Naive thymus-derived CD4-positive, alpha-beta T cell (primary cell): ENCODE measurements at regions of chr10 and their contacts with region 1.

Region 1: DNA sequence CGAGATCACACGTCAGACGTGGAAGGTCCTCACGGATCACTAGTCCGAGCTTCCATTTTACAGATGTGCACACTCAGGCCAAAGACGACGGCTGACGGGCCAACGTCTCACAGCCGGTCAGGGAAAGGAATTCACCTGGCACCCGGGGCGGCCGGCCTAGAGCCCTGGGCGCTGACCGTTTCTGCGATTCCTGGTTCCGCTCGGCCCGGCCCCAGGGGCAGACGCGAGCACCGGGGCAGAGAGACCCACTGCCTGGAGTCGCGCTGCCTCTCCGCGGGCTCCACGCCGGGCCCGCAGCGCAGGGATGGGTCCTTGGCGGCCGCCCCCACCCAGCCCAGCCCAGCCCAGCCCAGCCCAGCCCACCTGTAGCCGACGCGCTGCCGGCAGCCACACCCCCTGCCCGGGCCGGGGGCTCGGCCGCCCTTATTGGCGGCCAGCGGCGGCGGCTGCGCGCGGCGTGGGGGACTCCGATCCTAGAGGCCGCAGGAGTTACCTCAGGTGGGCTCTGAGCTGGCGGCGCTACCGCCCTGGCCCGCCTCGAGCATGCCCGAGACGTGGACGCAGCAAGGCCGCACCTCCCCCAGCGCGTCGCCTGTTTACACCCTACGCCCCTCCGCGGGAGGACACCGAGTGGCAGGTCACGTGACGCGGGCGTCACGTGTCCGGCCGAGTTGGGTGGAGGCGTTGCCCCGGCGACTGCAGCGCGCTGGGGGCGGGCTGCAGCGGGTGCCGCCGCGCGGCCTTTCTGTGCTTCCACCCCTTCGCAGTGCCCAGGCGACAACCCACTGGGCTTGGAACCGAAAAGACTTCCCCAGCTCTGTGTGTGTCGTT is 78.1 kb downstream of the ZFAND4 start:
- DNase-seq: peak; percentile 83 to 94 (median 88)
- ATAC-seq: peak; percentile 95
- H3K4me3 ChIP-seq: peak overlapping the region; percentile 85
- H3K4me3 Mint-ChIP-seq: peak overlapping the region; percentile 86 to 96 (median 93)
- H3K27ac ChIP-seq: peak overlapping the region; percentile 79
- H3K27ac Mint-ChIP-seq: peak overlapping the region; percentile 72 to 97 (median 93)
- H3K4me1 ChIP-seq: peaks cover 11 to 20% of the 10 kb centered on the region in 2 donors
- H3K4me1 Mint-ChIP-seq: peaks cover 27 to 51% (median 40%) of the 10 kb centered on the region in 7 donors
- H3K27me3 ChIP-seq: no peaks in the 10 kb centered on the region
- H3K27me3 Mint-ChIP-seq: peaks cover 4 to 7% (median 7%) of the 10 kb centered on the region in 5 donors

Region 2: GRCh38 chr10:45420453-45421192 is 173.9 kb before region 1 on chr10:
- CTCF ChIA-PET with region 1: no interaction called
- POLR2A ChIA-PET with region 1: no interaction called
- intact Hi-C with region 1: loop called (anchors 2 kb)
- DNase-seq: peak in 8 of 9 donors; percentile 35 to 52 (median 39)
- ATAC-seq: peak; percentile 47
- H3K4me3 ChIP-seq: peak overlapping the region; percentile 35
- H3K4me3 Mint-ChIP-seq: peak overlapping the region; percentile 89 to 97 (median 94)
- H3K27ac ChIP-seq: peak overlapping the region; percentile 82
- H3K27ac Mint-ChIP-seq: peak overlapping the region; percentile 87 to 99 (median 96)
- H3K4me1 ChIP-seq: peaks cover 32 to 41% of the 10 kb centered on the region in 2 donors
- H3K4me1 Mint-ChIP-seq: peaks cover 39 to 77% (median 50%) of the 10 kb centered on the region in 7 donors
- H3K27me3 ChIP-seq: no peaks in the 10 kb centered on the region
- H3K27me3 Mint-ChIP-seq: no peaks in the 10 kb centered on the region

Region 3: GRCh38 chr10:45433716-45434469 is 160.6 kb before region 1 on chr10:
- CTCF ChIA-PET with region 1: no interaction called
- POLR2A ChIA-PET with region 1: no interaction called
- intact Hi-C with region 1: no loop called
- DNase-seq: peak in 2 of 9 donors; percentile 19 to 30
- ATAC-seq: peak; percentile 49
- H3K4me3 ChIP-seq: no peak overlapping the region
- H3K4me3 Mint-ChIP-seq: peak overlapping the region in 8 of 10 donors; percentile 10 to 64 (median 33)
- H3K27ac ChIP-seq: peak overlapping the region; percentile 59
- H3K27ac Mint-ChIP-seq: peak overlapping the region; percentile 37 to 92 (median 78)
- H3K4me1 ChIP-seq: peaks cover 0 to 10% of the 10 kb centered on the region in 2 donors
- H3K4me1 Mint-ChIP-seq: peaks cover 12 to 40% (median 21%) of the 10 kb centered on the region in 7 donors
- H3K27me3 ChIP-seq: no peaks in the 10 kb centered on the region
- H3K27me3 Mint-ChIP-seq: peaks cover 0 to 3% (median 0%) of the 10 kb centered on the region in 5 donors

Region 4: DNA sequence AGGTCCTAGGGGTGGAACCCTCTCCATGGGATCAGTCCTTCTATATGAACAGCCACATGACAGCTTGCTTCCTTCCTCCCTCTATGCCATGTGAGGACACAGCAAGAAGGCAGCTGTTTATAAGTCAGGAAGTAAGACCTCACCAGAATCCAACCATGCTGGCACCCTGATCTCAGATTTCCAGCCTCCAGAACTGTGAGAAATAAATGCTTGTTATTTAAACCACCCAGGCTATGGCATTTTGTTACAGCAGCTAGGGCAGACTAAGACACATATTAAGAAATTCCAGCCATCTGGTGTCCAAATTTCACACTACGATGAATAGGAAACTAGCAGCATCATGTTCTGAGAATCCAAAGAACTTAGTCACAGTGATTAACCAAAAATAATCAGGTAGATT is 62.0 kb before region 1 on chr10:
- CTCF ChIA-PET with region 1: no interaction called
- POLR2A ChIA-PET with region 1: no interaction called
- intact Hi-C with region 1: no loop called
- DNase-seq: no peak
- ATAC-seq: no peak
- H3K4me3 ChIP-seq: no peak overlapping the region
- H3K4me3 Mint-ChIP-seq: no peak overlapping the region
- H3K27ac ChIP-seq: no peak overlapping the region
- H3K27ac Mint-ChIP-seq: peak overlapping the region in 2 of 9 donors; percentile 8 to 32
- H3K4me1 ChIP-seq: no peaks in the 10 kb centered on the region
- H3K4me1 Mint-ChIP-seq: peaks cover 0 to 43% (median 38%) of the 10 kb centered on the region in 7 donors
- H3K27me3 ChIP-seq: no peaks in the 10 kb centered on the region
- H3K27me3 Mint-ChIP-seq: peaks cover 0 to 3% (median 0%) of the 10 kb centered on the region in 5 donors

Region 5: DNA sequence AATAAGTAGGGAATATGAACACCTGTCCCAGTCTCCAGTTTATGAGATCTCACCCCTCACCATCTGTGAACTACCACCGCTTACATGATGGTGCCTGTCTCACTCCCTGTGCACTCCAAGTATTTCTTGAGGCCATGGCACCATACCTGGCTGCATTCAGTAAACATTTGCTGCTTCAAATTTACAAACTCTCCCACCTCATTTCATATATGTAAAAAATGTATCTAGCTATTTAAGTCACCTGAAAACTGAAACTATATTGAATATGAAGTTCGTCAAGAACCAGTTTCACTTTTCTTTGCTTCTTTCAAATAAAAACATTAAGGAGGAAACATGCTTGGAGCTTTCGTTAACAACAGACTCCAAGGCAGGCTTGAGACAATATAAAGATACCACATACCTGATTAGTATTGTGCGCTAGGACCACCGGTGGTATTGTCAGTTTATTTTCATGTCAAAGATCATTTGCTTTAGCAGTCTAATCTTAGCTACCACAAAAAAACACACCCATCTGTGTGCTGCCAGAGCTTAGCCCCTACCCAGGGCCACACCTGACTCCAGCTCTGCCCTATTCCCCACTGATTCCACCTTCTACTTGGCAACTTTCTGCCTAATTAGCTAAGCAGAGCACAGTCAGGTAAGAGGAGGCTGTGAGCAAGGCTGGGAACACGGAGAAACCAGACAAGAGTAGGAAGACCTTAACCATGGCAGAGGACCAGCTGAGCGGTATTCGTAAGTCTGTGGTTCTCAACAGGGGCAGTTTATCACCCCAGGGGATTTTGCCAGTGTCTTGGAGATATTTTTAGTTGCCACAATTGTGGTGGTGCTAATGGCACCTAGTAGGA is 13.9 kb before region 1 on chr10:
- CTCF ChIA-PET with region 1: interaction called, 4 read pairs
- POLR2A ChIA-PET with region 1: interaction called, 30 read pairs
- intact Hi-C with region 1: loop called (anchors 1 kb)
- DNase-seq: peak in 7 of 9 donors; percentile 25 to 45 (median 30)
- ATAC-seq: peak; percentile 80
- H3K4me3 ChIP-seq: peak overlapping the region; percentile 61
- H3K4me3 Mint-ChIP-seq: peak overlapping the region; percentile 88 to 97 (median 92)
- H3K27ac ChIP-seq: peak overlapping the region; percentile 78
- H3K27ac Mint-ChIP-seq: peak overlapping the region; percentile 89 to 97 (median 95)
- H3K4me1 ChIP-seq: peaks cover 12 to 14% of the 10 kb centered on the region in 2 donors
- H3K4me1 Mint-ChIP-seq: peaks cover 24 to 48% (median 43%) of the 10 kb centered on the region in 7 donors
- H3K27me3 ChIP-seq: no peaks in the 10 kb centered on the region
- H3K27me3 Mint-ChIP-seq: peaks cover 0 to 11% (median 0%) of the 10 kb centered on the region in 5 donors

Region 6: DNA sequence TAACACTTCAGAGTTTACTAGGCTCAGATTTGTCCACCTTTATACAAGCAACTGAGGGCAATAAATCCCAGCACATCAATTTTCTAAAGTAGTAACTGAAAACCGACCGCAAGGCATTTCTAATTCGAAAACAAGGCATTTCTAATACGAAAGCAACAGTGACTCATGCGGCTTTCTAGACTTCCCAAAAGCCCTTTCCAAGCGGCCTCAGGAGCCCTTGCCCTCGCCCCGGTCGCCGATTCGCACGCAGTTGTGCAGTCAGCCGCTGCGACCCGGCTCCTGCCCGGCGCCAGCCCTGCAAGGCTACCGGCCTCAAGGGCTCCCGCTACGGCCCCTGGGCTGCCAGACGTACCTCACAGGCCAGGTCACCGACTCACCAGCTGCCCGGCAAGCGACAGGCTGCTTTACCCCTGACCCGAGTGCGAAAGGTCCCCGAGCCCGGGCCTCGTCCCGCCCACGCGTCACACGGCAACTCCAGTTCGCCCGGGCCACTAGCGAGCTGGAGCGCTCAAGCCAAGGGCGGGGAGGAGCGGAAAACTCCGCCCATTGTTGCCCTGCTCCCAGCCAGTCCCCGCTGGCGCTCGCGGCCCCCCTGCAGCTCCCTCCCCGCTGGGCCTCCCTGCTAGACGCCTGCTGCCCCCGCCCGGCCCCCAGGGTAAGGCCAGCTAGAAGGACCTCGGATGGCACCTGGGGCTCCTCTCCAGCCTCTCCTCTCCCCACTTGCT is 428.6 kb after region 1 on chr10:
- CTCF ChIA-PET with region 1: no interaction called
- POLR2A ChIA-PET with region 1: no interaction called
- intact Hi-C with region 1: loop called in 1 of 2 experiments (anchors 10 kb)
- DNase-seq: peak; percentile 59 to 85 (median 65)
- ATAC-seq: peak; percentile 96
- H3K4me3 ChIP-seq: peak overlapping the region; percentile 60
- H3K4me3 Mint-ChIP-seq: peak overlapping the region; percentile 78 to 95 (median 90)
- H3K27ac ChIP-seq: peak overlapping the region; percentile 75
- H3K27ac Mint-ChIP-seq: peak overlapping the region; percentile 51 to 95 (median 80)
- H3K4me1 ChIP-seq: peaks cover 38 to 55% of the 10 kb centered on the region in 2 donors
- H3K4me1 Mint-ChIP-seq: peaks cover 64 to 100% (median 94%) of the 10 kb centered on the region in 7 donors
- H3K27me3 ChIP-seq: no peaks in the 10 kb centered on the region
- H3K27me3 Mint-ChIP-seq: no peaks in the 10 kb centered on the region